ENCODE measurements at regions of chr19 and their contacts with region 1.

Region 1: DNA sequence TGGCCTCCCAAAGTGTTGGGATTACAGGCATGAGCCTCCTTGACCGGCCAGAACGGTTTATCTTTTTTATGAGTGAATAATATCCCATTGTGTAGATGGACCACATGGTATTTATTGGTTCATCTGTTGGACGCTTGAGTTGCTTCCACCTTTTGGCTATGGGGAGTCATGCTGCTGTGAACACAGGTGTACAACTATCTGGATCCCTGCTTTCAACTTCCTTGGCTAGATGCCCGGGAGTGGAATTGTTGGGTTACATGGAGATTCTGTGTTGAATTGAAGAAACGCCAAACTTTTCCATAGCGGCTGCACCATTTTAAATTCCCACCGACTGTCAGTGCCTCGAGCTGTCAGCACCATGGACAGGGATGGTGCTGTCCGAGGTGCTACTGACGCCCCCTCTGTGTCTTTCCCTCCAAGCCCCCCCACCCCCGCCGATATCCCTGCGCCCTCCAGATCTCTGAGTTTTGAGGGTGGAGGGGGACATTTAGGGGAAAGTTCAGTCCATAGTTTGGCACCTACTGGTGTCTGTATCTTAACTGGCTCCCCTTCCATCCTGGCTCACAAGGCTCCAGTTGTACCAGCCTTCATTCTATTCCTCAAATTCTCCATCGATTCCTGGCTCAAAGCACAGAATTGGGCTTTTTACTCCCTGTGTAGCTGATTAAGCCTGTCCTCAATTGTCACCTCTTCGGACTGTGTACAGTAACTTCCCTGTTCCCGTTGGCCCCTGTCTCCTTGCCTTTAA is 27.3 kb downstream of the PNPLA6 start:
- DNase-seq: no peak
- ATAC-seq: peak in 3 of 4 donors; percentile 24 to 57 (median 53)
- H3K4me3 ChIP-seq: no peak overlapping the region
- H3K27ac ChIP-seq: no peak overlapping the region
- H3K4me1 ChIP-seq: no peaks in the 10 kb centered on the region
- H3K27me3 ChIP-seq: no peaks in the 10 kb centered on the region
- CTCF ChIP-seq: no peak

Region 2: DNA sequence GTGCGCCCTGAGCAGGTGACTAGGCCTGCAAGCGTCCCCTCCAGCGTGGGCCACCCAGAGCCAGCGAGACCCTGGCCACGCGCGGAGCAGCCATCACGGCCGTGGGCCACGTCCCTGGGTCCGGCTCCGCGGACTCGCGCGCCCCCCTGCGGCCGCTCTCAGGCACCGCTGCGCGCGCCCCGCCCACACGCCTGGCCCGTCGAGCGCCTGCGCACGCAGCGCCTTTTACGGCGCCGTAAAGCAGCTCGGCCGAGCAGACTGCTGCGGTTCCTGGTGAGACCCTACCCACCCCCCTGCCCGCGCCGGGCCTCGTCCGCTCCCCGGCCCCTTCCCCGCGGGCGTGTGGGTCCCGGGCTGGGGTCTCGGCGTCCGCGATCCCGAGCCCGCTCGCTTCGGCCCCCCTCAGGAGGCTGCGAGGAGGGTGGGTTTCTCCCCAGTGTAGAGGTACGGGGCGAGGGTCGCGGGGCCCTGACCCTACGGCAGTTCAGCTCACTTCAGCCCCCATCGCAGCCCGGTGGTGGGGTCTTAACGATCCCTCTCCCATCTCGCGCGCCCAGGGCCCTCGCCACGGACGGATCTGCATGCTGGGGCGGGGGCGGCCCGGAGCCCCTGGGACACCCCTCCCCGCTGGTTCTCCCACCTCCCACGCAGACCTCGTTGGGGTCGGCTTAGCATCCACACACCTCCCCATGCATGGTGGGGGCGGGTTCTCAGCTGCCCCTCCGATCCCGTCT is 118.0 kb after region 1 on chr19 and contains the start of gene TRAPPC5:
- intact Hi-C with region 1: loop called in 2 of 3 experiments (anchors 5 kb)
- DNase-seq: peak; percentile 78 to 97 (median 91)
- ATAC-seq: peak; percentile 92 to 97 (median 96)
- H3K4me3 ChIP-seq: peak within 1 kb of the TSS; percentile 99 to 100 (median 100)
- H3K27ac ChIP-seq: peak within 1 kb of the TSS; percentile 69 to 84 (median 78)
- H3K4me1 ChIP-seq: peaks cover 0 to 3% (median 0%) of the 10 kb centered on the region in 3 donors
- H3K27me3 ChIP-seq: no peaks in the 10 kb centered on the region
- CTCF ChIP-seq: peak; percentile 97 to 98 (median 98)
- total RNA-seq, gene TRAPPC5: 26.7 to 49.8 (median 38.3) TPM

Region 3: GRCh38 chr19:7799640-7800355 is 237.0 kb after region 1 on chr19:
- intact Hi-C with region 1: loop called (anchors 5 to 10 kb)
- DNase-seq: peak in 5 of 6 donors; percentile 44 to 72 (median 61)
- ATAC-seq: peak; percentile 82 to 99 (median 95)
- H3K4me3 ChIP-seq: peak overlapping the region in 1 of 4 donors; percentile 17
- H3K27ac ChIP-seq: no peak overlapping the region
- H3K4me1 ChIP-seq: peaks cover 0 to 3% (median 0%) of the 10 kb centered on the region in 3 donors
- H3K27me3 ChIP-seq: peaks cover 0 to 14% (median 0%) of the 10 kb centered on the region in 4 donors
- CTCF ChIP-seq: peak; percentile 7 to 52 (median 24)